A549 (cell line): ENCODE measurements at regions of chr10 and their contacts with region 1.

Region 1: DNA sequence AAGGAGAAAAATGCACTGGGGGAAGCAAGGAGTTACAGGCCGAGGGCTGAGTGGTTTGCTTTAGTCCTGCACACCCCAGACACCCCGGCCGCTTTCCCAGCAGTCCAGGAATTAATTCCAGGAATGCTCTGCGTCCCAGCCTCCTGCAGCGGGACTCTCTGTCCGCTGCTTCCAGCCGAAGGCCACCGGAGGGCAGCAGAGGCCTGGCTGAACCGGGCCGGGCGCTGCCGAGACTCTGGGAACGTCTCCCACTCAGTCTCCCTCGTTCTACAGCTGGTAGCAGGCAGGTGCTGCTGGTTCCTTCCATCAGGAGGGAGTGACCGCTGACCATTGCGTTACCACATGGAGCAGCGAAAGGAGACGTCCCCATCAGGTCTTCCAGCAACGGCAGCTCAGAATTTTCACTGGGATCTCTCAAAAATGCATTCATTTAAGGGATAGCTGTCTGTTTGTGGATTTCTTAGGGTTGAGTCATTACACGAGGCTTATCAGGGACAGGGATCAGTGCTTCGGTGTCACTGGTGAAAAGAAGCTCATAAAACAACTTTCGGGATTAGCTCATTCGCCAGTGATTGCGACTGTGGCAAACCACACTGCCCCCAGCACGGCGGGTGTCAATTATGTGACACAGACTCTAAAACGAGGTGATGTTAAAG is 24.9 kb upstream of the PITRM1 start:
- DNase-seq: peak; percentile 78 to 92
- ATAC-seq: peak; percentile 96 to 98
- H3K4me3 ChIP-seq: peak overlapping the region; percentile 28; the same call in 2 of the 3 replicates
- H3K27ac ChIP-seq: peak overlapping the region; percentile 66 to 80
- H3K4me1 ChIP-seq: peaks cover 18% of the 10 kb centered on the region
- CTCF ChIP-seq: peak; percentile 93
- EP300 ChIP-seq: no peak; a peak in 1 of 5 replicates
- POLR2A ChIP-seq: no peak
- RAD21 ChIP-seq: peak; percentile 96 to 99

Region 2: DNA sequence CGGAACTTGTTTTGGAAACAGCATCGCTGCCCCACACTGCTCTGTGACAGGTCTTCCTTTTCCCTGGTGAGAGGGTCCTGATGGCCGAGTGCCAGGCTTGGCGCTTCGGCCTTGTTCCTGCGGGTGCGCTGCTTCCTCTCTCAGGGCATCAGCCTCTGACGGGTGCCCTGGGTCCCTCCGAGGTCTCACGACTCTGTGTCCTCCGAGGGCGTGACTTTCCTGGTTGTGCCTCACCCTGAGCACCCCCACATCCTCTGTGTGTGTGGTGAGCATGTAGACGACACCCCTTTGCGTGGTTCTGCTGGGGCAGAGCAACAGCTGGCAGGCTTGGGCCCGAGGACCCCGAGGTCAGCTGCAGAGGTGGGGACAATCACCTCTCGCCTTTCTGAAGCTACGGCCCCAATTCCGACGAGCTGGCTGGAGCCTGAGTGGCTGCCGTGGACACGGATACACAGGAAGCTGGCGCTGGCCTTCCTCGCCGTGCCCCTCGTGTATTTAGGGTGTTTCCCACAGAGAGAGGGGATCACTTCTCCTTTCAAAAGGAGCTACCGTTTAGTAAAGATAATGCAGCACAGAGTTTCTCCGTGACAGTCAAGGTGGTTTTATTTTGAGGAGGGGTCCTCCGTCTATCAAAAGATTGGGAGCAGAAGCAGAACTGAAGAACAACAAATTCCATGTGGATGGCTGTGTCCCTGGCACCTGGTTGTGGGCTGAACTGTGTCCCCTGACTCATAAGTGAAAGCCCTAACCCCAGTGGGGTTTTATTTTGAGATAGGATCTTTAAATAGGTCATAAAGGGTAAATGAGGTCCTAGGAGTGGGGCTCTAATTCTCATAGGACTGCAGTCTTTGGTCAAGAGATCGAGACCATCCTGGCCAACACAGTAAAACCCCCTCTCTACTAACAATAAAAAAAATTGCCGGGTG is 11.3 kb after region 1 on chr10:
- CTCF ChIA-PET with region 1: interaction called, 43 read pairs
- POLR2A ChIA-PET with region 1: no interaction called
- DNase-seq: no peak
- ATAC-seq: no peak
- H3K4me3 ChIP-seq: no peak overlapping the region
- H3K27ac ChIP-seq: no peak overlapping the region
- H3K4me1 ChIP-seq: no peaks in the 10 kb centered on the region
- CTCF ChIP-seq: no peak
- EP300 ChIP-seq: no peak
- POLR2A ChIP-seq: no peak
- RAD21 ChIP-seq: no peak

Region 3: GRCh38 chr10:3248888-3249758 is 51.6 kb after region 1 on chr10:
- CTCF ChIA-PET with region 1: interaction called, 17 read pairs
- POLR2A ChIA-PET with region 1: no interaction called
- DNase-seq: peak; percentile 69 to 77
- ATAC-seq: peak; percentile 89 to 94
- H3K4me3 ChIP-seq: no peak overlapping the region
- H3K27ac ChIP-seq: peak overlapping the region; percentile 78 to 88
- H3K4me1 ChIP-seq: peaks cover 20% of the 10 kb centered on the region
- CTCF ChIP-seq: no peak
- EP300 ChIP-seq: no peak
- POLR2A ChIP-seq: no peak
- RAD21 ChIP-seq: no peak

Region 4: GRCh38 chr10:4656576-4657182 is 1459.2 kb after region 1 on chr10:
- CTCF ChIA-PET with region 1: interaction called, 23 read pairs
- POLR2A ChIA-PET with region 1: no interaction called
- DNase-seq: peak; percentile 34 to 72
- ATAC-seq: peak in 1 of 2 experiments; percentile 65; a peak in 2 of 6 replicates
- H3K4me3 ChIP-seq: no peak overlapping the region
- H3K27ac ChIP-seq: peak overlapping the region; percentile 53 to 63; a peak in 2 of 6 replicates
- H3K4me1 ChIP-seq: peaks cover 26% of the 10 kb centered on the region
- CTCF ChIP-seq: peak; percentile 86
- EP300 ChIP-seq: no peak
- POLR2A ChIP-seq: no peak
- RAD21 ChIP-seq: peak; percentile 91 to 92